Ascending aorta (tissue), 2 donors: ENCODE measurements at regions of chr1 and their contacts with region 1.

Region 1: GRCh38 chr1:109931189-109931731 is 20.6 kb downstream of the CSF1 start:
- DNase-seq: peak in 1 of 2 donors; percentile 90
- H3K4me3 ChIP-seq: no peak overlapping the region
- H3K27ac ChIP-seq: peak overlapping the region; percentile 70 to 89
- H3K4me1 ChIP-seq: peaks cover 14 to 45% of the 10 kb centered on the region in 2 donors
- H3K27me3 ChIP-seq: no peaks in the 10 kb centered on the region
- CTCF ChIP-seq: no peak

Region 2: DNA sequence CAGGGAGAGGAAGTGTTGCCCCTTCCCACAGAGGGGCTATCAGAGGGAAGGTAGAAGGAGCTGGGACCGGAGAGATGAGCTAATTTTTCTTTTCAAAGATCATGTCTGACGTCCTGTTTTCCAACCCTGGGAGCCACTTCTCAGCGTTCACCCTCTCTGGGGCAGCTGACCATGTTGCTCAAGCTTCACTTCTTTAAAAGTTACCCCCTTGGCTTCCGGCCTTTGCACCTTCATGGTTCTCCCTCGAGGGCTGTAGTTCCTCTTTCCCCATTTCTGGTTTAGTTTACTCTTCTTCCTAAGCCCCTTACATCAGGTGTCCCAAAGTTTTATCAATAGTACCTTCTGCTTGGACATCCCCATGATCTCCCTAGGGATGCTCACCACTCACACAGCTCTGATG is 44.4 kb before region 1 on chr1:
- intact Hi-C with region 1: loop called (anchors 5 kb)
- DNase-seq: no peak
- H3K4me3 ChIP-seq: no peak overlapping the region
- H3K27ac ChIP-seq: no peak overlapping the region
- H3K4me1 ChIP-seq: peaks cover 9 to 20% of the 10 kb centered on the region in 2 donors
- H3K27me3 ChIP-seq: no peaks in the 10 kb centered on the region
- CTCF ChIP-seq: no peak

Region 3: GRCh38 chr1:109979489-109980091 is 48.3 kb after region 1 on chr1:
- intact Hi-C with region 1: loop called (anchors 5 kb)
- DNase-seq: no peak
- H3K4me3 ChIP-seq: no peak overlapping the region
- H3K27ac ChIP-seq: no peak overlapping the region
- H3K4me1 ChIP-seq: no peaks in the 10 kb centered on the region
- H3K27me3 ChIP-seq: no peaks in the 10 kb centered on the region
- CTCF ChIP-seq: no peak